Posterior cingulate gyrus (tissue), 11 donors: ENCODE measurements at regions of chr5 and their contacts with region 1.

Region 1: DNA sequence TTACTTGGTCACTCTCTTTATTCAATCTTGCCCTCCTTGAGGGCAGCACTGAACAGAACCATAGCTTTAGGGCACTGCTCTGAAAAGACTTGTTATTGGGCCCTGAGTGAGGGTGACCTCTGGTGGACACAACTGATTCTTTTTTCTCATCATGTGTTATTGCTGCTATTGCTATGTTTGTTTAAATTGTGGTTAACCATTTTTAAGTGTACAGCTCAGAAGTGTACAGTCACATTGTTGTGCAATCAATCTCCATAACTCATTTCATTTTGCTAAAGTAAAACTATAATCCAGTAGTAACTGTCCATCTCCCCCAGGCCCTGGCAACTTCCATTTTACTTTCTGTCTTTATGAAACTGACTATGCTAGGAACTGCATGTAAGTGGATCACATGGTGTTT is 351.1 kb upstream of the RIOK2 start:
- DNase-seq: peak in 3 of 10 donors; percentile 18 to 32 (median 27)

Region 2: GRCh38 chr5:97231025-97231636 is 303.0 kb before region 1 on chr5:
- intact Hi-C with region 1: loop called (anchors 5 kb)
- DNase-seq: peak in 3 of 10 donors; percentile 13 to 23 (median 15)

Region 3: GRCh38 chr5:98530224-98530623 is 996.1 kb after region 1 on chr5:
- intact Hi-C with region 1: no loop called
- DNase-seq: no peak